PC-9 (cell line): ENCODE measurements at regions of chr6 and their contacts with region 1.

Region 1: DNA sequence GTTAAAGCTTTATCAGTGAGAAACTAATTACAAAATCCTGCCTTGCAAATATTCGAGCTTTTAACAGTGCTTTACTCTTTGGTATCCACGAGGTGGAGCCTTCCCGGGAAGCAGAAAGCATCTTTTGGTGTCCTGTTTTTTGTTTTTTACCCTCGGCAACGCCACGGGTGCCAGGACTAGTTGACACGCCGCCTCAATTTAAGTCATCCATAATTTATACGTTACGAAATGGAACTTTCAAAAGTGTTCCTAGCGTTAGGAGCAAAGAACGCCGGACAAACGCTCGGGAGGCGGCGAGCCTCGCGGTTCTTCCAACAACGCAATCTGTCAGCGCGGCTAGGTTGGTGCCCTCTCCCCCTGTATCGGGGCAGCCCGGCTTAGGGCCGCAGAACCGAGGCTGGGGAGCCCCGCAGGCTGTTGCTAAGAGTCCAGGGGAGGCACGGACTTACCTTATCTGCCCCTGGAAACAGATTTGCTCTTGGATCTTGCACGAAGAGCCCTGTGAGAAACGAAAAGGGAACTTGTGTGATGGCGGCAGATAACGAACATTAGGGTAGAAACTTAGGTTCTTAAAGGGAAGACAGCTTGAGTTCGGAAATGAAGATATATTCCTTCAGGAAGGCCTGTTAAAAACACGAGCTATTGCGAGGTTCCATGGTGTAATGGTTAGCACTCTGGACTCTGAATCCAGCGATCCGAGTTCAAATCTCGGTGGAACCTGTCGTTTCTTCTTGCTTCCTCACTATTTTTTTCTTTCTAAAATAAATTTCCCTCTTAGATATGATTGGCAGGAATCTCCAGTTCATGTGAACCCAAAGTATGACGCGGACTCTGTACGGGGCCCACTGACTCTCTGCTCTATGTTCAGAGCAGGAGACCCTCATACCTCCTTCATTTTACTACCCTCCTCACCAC is 46.2 kb upstream of the ZNF184 start:
- DNase-seq: peak; percentile 72 to 85
- H3K4me3 ChIP-seq: peak overlapping the region; percentile 87
- H3K27ac ChIP-seq: peak overlapping the region; percentile 50
- H3K4me1 ChIP-seq: peaks cover 19% of the 10 kb centered on the region
- H3K27me3 ChIP-seq: no peaks in the 10 kb centered on the region
- CTCF ChIP-seq: peak; percentile 86

Region 2: GRCh38 chr6:27532820-27533538 is 13.8 kb after region 1 on chr6:
- CTCF ChIA-PET with region 1: interaction called, 3 read pairs
- POLR2A ChIA-PET with region 1: interaction called, 3 read pairs
- intact Hi-C with region 1: loop called (anchors 2 kb)
- DNase-seq: peak; percentile 51 to 76
- H3K4me3 ChIP-seq: peak overlapping the region; percentile 13; the same call in 1 of the 2 replicates
- H3K27ac ChIP-seq: no peak overlapping the region
- H3K4me1 ChIP-seq: peaks cover 18% of the 10 kb centered on the region
- H3K27me3 ChIP-seq: no peaks in the 10 kb centered on the region
- CTCF ChIP-seq: no peak

Region 3: GRCh38 chr6:27592481-27593199 is 73.5 kb after region 1 on chr6:
- CTCF ChIA-PET with region 1: interaction called, 3 read pairs
- POLR2A ChIA-PET with region 1: interaction called, 3 read pairs
- intact Hi-C with region 1: loop called (anchors 1 kb)
- DNase-seq: peak; percentile 56 to 73
- H3K4me3 ChIP-seq: peak overlapping the region; percentile 64
- H3K27ac ChIP-seq: no peak overlapping the region
- H3K4me1 ChIP-seq: peaks cover 11% of the 10 kb centered on the region; the same call in 1 of the 2 replicates
- H3K27me3 ChIP-seq: no peaks in the 10 kb centered on the region
- CTCF ChIP-seq: no peak